AG04449 (cell line): ENCODE measurements at regions of chr1 and their contacts with region 1.

Region 1: GRCh38 chr1:158107916-158108315 is 72.8 kb upstream of the CD1D start:
- DNase-seq: no peak
- H3K4me3 ChIP-seq: no peak overlapping the region
- CTCF ChIP-seq: no peak

Region 2: GRCh38 chr1:157878059-157878458 is 229.9 kb before region 1 on chr1:
- CTCF ChIA-PET with region 1: no interaction called
- POLR2A ChIA-PET with region 1: no interaction called
- DNase-seq: no peak
- H3K4me3 ChIP-seq: no peak overlapping the region
- CTCF ChIP-seq: peak; percentile 35

Region 3: GRCh38 chr1:158095737-158096335 is 12.1 kb before region 1 on chr1:
- CTCF ChIA-PET with region 1: interaction called, 588 read pairs
- POLR2A ChIA-PET with region 1: no interaction called
- DNase-seq: no peak
- H3K4me3 ChIP-seq: no peak overlapping the region
- CTCF ChIP-seq: peak; percentile 80

Region 4: GRCh38 chr1:158257888-158258287 is 150.0 kb after region 1 on chr1:
- CTCF ChIA-PET with region 1: no interaction called
- POLR2A ChIA-PET with region 1: no interaction called
- DNase-seq: no peak
- H3K4me3 ChIP-seq: no peak overlapping the region
- CTCF ChIP-seq: no peak